Esophagus muscularis mucosa (tissue), 4 donors: ENCODE measurements at regions of chr7 and their contacts with region 1.

Region 1: DNA sequence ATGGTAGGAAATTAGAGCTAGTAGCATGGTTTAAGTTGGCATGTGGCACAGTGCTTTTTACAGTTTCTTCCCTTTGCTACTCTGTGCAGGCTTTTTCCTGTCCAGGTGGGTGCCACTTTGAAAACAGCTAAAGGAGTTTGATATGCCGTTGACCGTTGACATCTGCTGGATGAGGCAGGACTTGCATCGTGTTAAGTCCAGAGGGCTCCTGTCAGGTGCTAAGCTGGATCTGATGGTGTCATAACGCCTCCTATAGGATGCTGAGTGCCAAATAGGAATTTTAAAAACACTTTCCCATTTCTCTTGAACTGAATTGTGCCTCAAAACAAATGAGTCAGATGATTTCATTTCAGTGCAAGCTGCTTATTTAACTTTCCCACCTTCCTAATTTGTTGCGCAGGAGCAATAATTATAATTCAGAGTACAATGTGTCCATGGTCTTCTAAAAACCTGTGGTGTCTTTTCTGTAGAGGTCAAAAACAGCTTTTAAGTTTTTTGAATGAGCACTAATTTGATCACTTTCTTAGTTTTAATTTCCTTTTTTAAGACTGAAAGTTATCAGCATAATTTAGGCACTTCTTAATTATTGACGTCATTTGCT is 178.3 kb downstream of the CDCA7L start:
- DNase-seq: no peak
- H3K4me3 ChIP-seq: no peak overlapping the region
- H3K27ac ChIP-seq: no peak overlapping the region
- H3K4me1 ChIP-seq: peaks cover 0 to 17% (median 13%) of the 10 kb centered on the region in 4 donors
- H3K27me3 ChIP-seq: no peaks in the 10 kb centered on the region
- CTCF ChIP-seq: peak; percentile 24 to 60 (median 32)
- EP300 ChIP-seq: no peak
- POLR2A ChIP-seq: no peak

Region 2: GRCh38 chr7:21542891-21543527 is 224.4 kb before region 1 on chr7 and contains the start of gene DNAH11:
- intact Hi-C with region 1: loop called (anchors 10 kb)
- DNase-seq: no peak
- H3K4me3 ChIP-seq: peak within 1 kb of the TSS; percentile 61 to 74 (median 68)
- H3K27ac ChIP-seq: peak within 1 kb of the TSS; percentile 53 to 78 (median 59)
- H3K4me1 ChIP-seq: peaks cover 13 to 31% (median 16%) of the 10 kb centered on the region in 4 donors
- H3K27me3 ChIP-seq: peaks cover 0 to 12% (median 0%) of the 10 kb centered on the region in 4 donors
- CTCF ChIP-seq: peak in 1 of 3 experiments; percentile 18
- EP300 ChIP-seq: no peak
- POLR2A ChIP-seq: no peak
- total RNA-seq, gene DNAH11: 8.7 to 16.6 (median 13.1) TPM

Region 3: GRCh38 chr7:22001345-22002004 is 234.1 kb after region 1 on chr7:
- intact Hi-C with region 1: loop called (anchors 5 kb)
- DNase-seq: peak; percentile 12
- H3K4me3 ChIP-seq: no peak overlapping the region
- H3K27ac ChIP-seq: peak overlapping the region in 2 of 4 donors; percentile 41 to 57
- H3K4me1 ChIP-seq: peaks cover 0 to 33% (median 18%) of the 10 kb centered on the region in 4 donors
- H3K27me3 ChIP-seq: no peaks in the 10 kb centered on the region
- CTCF ChIP-seq: peak; percentile 83 to 87 (median 86)
- EP300 ChIP-seq: no peak
- POLR2A ChIP-seq: no peak

Region 4: DNA sequence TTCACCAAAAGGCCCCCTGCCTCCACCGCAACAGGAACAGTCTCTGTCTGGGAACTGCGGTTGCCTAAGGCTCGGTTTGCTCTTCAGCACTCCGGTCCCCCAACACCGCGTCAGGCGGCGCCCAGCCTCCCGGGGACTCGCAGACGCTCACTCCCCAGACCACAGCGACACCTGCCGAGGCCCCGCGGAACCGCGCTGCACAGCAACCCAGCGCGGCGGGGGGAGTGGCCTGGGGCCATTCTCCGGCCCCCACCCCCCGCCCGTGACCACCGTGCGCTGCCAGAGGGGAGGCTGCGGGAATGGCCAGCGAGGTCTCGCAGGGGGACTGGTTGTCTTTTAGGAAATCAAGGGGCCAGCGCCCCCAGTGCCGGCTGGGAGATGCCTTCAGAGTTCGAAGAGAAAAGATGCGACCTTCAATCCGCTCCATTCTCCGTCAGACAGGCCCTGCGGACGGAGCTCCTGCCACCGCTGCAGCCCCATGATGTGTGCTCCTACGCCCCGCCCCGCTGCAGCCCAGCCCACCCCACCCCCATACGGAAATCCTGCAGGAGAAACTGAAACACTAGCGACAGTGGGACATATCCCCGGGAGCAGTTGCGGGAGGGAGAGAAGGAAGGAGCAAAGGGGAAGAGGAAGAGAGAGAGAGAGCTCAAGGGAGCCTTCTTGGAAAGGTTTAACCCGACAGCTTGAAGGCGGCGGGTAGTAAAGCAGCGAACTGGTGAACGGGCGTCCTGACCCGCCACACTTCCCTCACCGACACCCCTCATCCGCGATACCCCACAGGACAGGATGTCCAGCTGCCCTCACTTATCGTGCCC is 315.7 kb after region 1 on chr7:
- intact Hi-C with region 1: loop called (anchors 10 kb)
- DNase-seq: peak; percentile 97
- H3K4me3 ChIP-seq: peak overlapping the region; percentile 65 to 84 (median 71)
- H3K27ac ChIP-seq: peak overlapping the region; percentile 84 to 90 (median 88)
- H3K4me1 ChIP-seq: peaks cover 8 to 16% (median 14%) of the 10 kb centered on the region in 4 donors
- H3K27me3 ChIP-seq: no peaks in the 10 kb centered on the region
- CTCF ChIP-seq: peak in 2 of 3 experiments; percentile 94 to 97
- EP300 ChIP-seq: no peak
- POLR2A ChIP-seq: no peak